MCF 10A (cell line): ENCODE measurements at regions of chr4 and their contacts with region 1.

Region 1: DNA sequence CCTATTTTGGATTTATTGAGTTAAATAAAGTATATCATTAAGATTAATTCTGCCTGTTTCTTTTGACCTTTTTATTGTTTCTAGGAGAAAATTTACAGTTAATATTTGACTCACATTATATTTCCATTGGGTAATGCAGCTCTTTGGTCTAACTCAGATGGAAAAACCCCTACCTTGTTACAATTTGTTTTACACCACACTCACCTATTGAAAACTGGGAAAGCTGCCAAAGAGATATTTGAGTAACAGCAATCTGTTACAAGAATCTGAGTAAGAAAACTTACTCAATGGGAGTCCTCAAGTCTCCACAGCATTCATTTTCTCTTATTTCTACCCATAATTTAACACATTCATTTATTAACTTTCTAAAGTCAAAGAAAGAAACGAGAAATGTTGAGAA is 108.0 kb upstream of the TLL1 start:
- DNase-seq: peak; percentile 79
- H3K4me3 Mint-ChIP-seq: no peak overlapping the region
- H3K27ac Mint-ChIP-seq: peak overlapping the region; percentile 43
- H3K4me1 Mint-ChIP-seq: peaks cover 9% of the 10 kb centered on the region
- H3K27me3 Mint-ChIP-seq: no peaks in the 10 kb centered on the region
- CTCF ChIP-seq: no peak

Region 2: DNA sequence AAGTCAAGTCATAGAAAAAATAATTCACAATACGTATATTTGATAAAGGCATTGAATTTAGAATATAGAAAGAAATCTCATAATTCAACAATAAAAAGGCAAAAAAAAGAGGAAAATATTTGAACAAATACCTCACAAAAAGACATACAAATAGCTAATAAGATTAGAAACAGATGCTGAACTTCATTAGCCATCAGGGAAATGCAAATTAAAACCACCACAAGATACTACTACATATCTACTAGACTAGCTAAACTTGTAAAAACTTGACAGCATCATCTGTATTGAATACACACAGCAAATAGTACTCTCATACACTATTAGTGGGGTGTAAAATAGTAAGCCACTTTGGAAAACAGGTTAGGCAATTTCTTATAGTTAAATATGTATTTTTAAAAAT is 20.7 kb before region 1 on chr4:
- CTCF ChIA-PET with region 1: interaction called, 3 read pairs
- POLR2A ChIA-PET with region 1: interaction called, 10 read pairs
- intact Hi-C with region 1: no loop called
- DNase-seq: no peak
- H3K4me3 Mint-ChIP-seq: no peak overlapping the region
- H3K27ac Mint-ChIP-seq: no peak overlapping the region
- H3K4me1 Mint-ChIP-seq: peaks cover 17% of the 10 kb centered on the region
- H3K27me3 Mint-ChIP-seq: no peaks in the 10 kb centered on the region
- CTCF ChIP-seq: no peak

Region 3: GRCh38 chr4:166435449-166435848 is 670.4 kb after region 1 on chr4:
- CTCF ChIA-PET with region 1: no interaction called
- POLR2A ChIA-PET with region 1: no interaction called
- intact Hi-C with region 1: no loop called
- DNase-seq: peak; percentile 41
- H3K4me3 Mint-ChIP-seq: no peak overlapping the region
- H3K27ac Mint-ChIP-seq: peak overlapping the region; percentile 36
- H3K4me1 Mint-ChIP-seq: peaks cover 11% of the 10 kb centered on the region
- H3K27me3 Mint-ChIP-seq: no peaks in the 10 kb centered on the region
- CTCF ChIP-seq: no peak

Region 4: DNA sequence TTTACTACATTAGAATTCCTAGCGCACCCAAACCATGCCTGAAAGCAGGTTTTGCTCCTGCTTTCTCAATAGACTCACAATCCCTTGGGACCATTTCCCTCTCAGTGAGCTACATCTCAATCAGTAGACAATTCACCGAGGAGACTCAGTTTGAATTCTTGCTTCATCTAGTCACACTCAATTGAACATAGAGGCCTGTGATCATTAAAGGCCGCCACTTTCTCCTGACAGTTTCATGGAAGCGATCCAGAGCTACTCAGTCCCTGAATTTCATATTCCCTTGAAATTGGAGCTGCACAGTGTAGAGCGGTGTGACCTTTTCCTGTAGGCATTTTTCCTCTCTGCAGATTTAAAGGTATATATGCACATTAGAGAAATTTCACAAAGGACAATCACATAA is 1663.1 kb after region 1 on chr4:
- CTCF ChIA-PET with region 1: no interaction called
- POLR2A ChIA-PET with region 1: no interaction called
- intact Hi-C with region 1: no loop called
- DNase-seq: peak; percentile 31
- H3K4me3 Mint-ChIP-seq: no peak overlapping the region
- H3K27ac Mint-ChIP-seq: peak overlapping the region; percentile 18
- H3K4me1 Mint-ChIP-seq: peaks cover 6% of the 10 kb centered on the region
- H3K27me3 Mint-ChIP-seq: no peaks in the 10 kb centered on the region
- CTCF ChIP-seq: no peak